ENCODE measurements at regions of chr4 and their contacts with region 1.

Region 1: DNA sequence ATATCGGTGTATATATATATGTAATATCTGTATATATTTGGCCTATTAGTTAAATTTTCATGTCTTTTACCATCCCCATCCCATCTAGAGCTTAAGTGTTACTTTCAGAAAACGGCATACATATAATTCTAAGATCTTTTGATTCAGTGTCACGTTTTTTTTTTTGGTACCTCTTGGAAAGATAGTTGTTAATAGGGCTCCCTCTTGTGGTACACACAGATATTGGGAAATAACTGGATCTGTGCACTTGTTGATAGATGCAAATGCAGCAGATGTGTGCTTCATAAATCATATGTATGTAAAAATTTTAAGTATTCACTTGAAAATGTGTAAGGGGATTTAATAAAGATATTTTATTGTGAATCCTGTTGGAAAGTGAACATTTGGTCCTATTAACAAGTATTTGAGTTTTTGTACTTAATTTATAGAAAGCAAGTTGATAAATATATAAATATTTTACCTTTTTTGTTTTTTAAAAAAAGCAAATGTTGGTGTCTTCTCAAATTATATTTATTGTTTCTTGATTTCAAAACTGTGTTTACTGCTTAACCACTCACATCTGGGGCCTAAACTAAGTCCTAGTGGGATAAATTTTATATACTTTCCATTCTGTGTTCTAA is 74.7 kb downstream of the PAQR3 start:
- DNase-seq: no peak
- ATAC-seq: peak; percentile 84
- H3K4me3 ChIP-seq: no peak overlapping the region
- H3K27ac ChIP-seq: no peak overlapping the region
- H3K4me1 ChIP-seq: no peaks in the 10 kb centered on the region
- H3K27me3 ChIP-seq: no peaks in the 10 kb centered on the region
- CTCF ChIP-seq: peak; percentile 90

Region 2: GRCh38 chr4:78612398-78613178 is 251.9 kb before region 1 on chr4:
- intact Hi-C with region 1: loop called (anchors 5 kb)
- DNase-seq: no peak
- ATAC-seq: peak; percentile 73
- H3K4me3 ChIP-seq: no peak overlapping the region
- H3K27ac ChIP-seq: no peak overlapping the region
- H3K4me1 ChIP-seq: no peaks in the 10 kb centered on the region
- H3K27me3 ChIP-seq: no peaks in the 10 kb centered on the region
- CTCF ChIP-seq: peak; percentile 71

Region 3: DNA sequence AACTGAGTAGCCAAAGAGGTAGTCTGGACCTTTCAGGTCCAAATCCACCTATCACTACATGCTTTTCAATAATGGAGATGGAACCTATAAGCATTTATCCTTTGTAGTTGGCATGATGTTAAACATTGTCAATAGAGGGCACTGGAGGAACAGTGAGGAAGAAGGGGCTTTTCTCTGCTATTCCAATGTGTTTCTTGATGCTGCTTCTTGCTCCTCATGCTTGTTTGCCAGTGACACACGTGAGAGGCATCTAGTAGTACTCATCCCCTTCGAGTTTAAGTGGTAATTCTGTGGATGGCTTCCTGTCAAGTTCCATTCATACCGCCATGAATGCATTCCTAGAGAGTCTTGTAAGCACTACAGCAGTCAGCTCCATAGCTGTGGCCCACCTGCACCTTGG is 377.3 kb after region 1 on chr4:
- intact Hi-C with region 1: no loop called
- DNase-seq: no peak
- ATAC-seq: no peak
- H3K4me3 ChIP-seq: no peak overlapping the region
- H3K27ac ChIP-seq: no peak overlapping the region
- H3K4me1 ChIP-seq: no peaks in the 10 kb centered on the region
- H3K27me3 ChIP-seq: no peaks in the 10 kb centered on the region
- CTCF ChIP-seq: no peak

Measured in upper lobe of right lung (tissue), 1 donor.